Astrocyte of the cerebellum (primary cell): ENCODE measurements at regions of chr12 and their contacts with region 1.

Region 1: GRCh38 chr12:58670623-58671022 is 249.7 kb downstream of the LRIG3 start:
- DNase-seq: no peak
- H3K4me3 ChIP-seq: no peak overlapping the region
- CTCF ChIP-seq: no peak

Region 2: GRCh38 chr12:58639302-58639934 is 31.2 kb before region 1 on chr12:
- in situ Hi-C with region 1: loop called (anchors 5 kb)
- DNase-seq: no peak
- H3K4me3 ChIP-seq: no peak overlapping the region
- CTCF ChIP-seq: no peak

Region 3: GRCh38 chr12:59020073-59020946 is 349.7 kb after region 1 on chr12:
- in situ Hi-C with region 1: no loop called
- DNase-seq: no peak
- H3K4me3 ChIP-seq: no peak overlapping the region
- CTCF ChIP-seq: no peak